Naive thymus-derived CD4-positive, alpha-beta T cell (primary cell): ENCODE measurements at regions of chr2 and their contacts with region 1.

Region 1: DNA sequence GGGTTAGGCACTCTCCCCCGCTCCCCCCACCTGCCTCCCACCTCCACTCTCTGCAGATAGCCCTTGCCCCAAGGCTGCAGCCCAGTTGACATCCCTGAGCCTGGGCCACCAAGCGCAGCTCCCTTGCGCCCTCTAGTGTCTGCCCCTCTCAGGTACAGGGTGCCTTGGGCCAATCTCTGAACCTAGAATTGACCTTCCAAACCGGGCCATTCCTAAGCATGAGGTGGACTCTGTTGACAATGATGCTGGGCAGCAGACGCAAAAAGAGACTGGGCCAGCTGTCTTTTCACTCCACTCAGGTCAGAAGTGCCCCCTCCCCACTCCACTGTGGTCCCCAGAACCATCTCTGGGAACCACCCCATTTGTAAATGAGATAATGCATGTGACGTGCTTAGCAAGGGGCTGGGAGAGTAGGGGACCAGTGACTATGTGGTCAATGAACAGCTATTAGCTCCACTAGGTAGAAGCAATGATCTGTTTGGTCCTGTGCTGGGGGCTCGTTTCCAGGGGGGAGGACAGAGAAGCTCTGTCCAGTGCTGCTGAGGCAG is 43.3 kb upstream of the PLB1 start:
- DNase-seq: peak; percentile 42 to 86 (median 65)
- ATAC-seq: peak; percentile 79
- H3K4me3 ChIP-seq: no peak overlapping the region
- H3K4me3 Mint-ChIP-seq: no peak overlapping the region
- H3K27ac ChIP-seq: no peak overlapping the region
- H3K27ac Mint-ChIP-seq: no peak overlapping the region
- H3K4me1 ChIP-seq: no peaks in the 10 kb centered on the region
- H3K4me1 Mint-ChIP-seq: peaks cover 0 to 44% (median 0%) of the 10 kb centered on the region in 7 donors
- H3K27me3 ChIP-seq: no peaks in the 10 kb centered on the region
- H3K27me3 Mint-ChIP-seq: no peaks in the 10 kb centered on the region

Region 2: DNA sequence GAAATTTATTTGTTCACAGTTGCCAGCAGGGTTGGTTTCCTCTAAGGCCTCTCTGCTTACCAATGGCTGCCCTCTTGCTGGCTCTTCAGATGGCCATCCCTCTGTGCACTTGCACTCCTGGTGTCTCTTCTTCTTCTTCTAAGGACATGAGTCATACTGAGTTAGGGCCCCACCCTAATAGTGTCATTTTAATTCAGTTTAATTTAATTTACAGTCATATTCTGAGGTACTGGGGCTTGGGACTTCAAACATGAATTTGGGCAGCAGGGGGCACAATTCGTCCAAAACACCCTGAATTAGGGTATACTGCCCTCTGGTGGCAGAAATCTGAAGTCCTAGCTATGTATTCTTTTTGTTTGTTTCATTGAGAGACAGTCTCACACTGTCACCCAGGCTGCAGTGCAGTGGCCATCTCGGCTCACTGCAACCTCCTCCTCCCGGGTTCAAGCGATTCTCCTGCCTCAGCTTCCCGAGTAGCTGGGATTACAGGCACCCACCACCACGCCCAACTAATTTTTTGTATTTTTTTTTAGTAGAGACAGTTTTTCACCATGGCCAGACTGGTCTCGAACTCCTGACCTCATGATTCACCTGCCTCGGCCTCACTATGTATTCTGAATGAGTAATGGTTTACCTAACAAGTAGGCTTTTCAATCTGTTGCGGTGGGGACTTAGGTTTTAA is 769.1 kb before region 1 on chr2:
- CTCF ChIA-PET with region 1: interaction called, 3 read pairs
- POLR2A ChIA-PET with region 1: no interaction called
- intact Hi-C with region 1: loop called in 1 of 2 experiments (anchors 1 kb)
- DNase-seq: peak; percentile 54 to 90 (median 82)
- ATAC-seq: peak; percentile 98
- H3K4me3 ChIP-seq: no peak overlapping the region
- H3K4me3 Mint-ChIP-seq: peak overlapping the region in 1 of 10 donors; percentile 35
- H3K27ac ChIP-seq: no peak overlapping the region
- H3K27ac Mint-ChIP-seq: peak overlapping the region; percentile 35 to 78 (median 66)
- H3K4me1 ChIP-seq: peaks cover 0 to 28% of the 10 kb centered on the region in 2 donors
- H3K4me1 Mint-ChIP-seq: peaks cover 5 to 25% (median 13%) of the 10 kb centered on the region in 7 donors
- H3K27me3 ChIP-seq: no peaks in the 10 kb centered on the region
- H3K27me3 Mint-ChIP-seq: no peaks in the 10 kb centered on the region

Region 3: GRCh38 chr2:27723372-27724144 is 729.0 kb before region 1 on chr2:
- CTCF ChIA-PET with region 1: no interaction called
- POLR2A ChIA-PET with region 1: no interaction called
- intact Hi-C with region 1: loop called in 1 of 2 experiments (anchors 1 kb)
- DNase-seq: peak in 2 of 9 donors; percentile 18 to 26
- ATAC-seq: peak; percentile 57
- H3K4me3 ChIP-seq: no peak overlapping the region
- H3K4me3 Mint-ChIP-seq: no peak overlapping the region
- H3K27ac ChIP-seq: no peak overlapping the region
- H3K27ac Mint-ChIP-seq: no peak overlapping the region
- H3K4me1 ChIP-seq: no peaks in the 10 kb centered on the region
- H3K4me1 Mint-ChIP-seq: peaks cover 0 to 29% (median 10%) of the 10 kb centered on the region in 7 donors
- H3K27me3 ChIP-seq: no peaks in the 10 kb centered on the region
- H3K27me3 Mint-ChIP-seq: peaks cover 0 to 19% (median 11%) of the 10 kb centered on the region in 5 donors

Region 4: GRCh38 chr2:27771548-27772335 is 680.9 kb before region 1 on chr2 and contains the start of gene MRPL33:
- CTCF ChIA-PET with region 1: no interaction called
- POLR2A ChIA-PET with region 1: no interaction called
- intact Hi-C with region 1: loop called in 1 of 2 experiments (anchors 5 kb)
- DNase-seq: peak; percentile 85 to 92 (median 89)
- ATAC-seq: peak; percentile 97
- H3K4me3 ChIP-seq: peak within 1 kb of the TSS; percentile 92
- H3K4me3 Mint-ChIP-seq: peak within 1 kb of the TSS; percentile 96 to 100 (median 99)
- H3K27ac ChIP-seq: peak within 1 kb of the TSS; percentile 92
- H3K27ac Mint-ChIP-seq: peak within 1 kb of the TSS; percentile 97 to 100 (median 100)
- H3K4me1 ChIP-seq: peaks cover 10 to 20% of the 10 kb centered on the region in 2 donors
- H3K4me1 Mint-ChIP-seq: peaks cover 32 to 59% (median 52%) of the 10 kb centered on the region in 7 donors
- H3K27me3 ChIP-seq: no peaks in the 10 kb centered on the region
- H3K27me3 Mint-ChIP-seq: peaks cover 0 to 8% (median 0%) of the 10 kb centered on the region in 5 donors
- total RNA-seq, gene MRPL33: 27.3 to 39.4 (median 35.1) TPM

Region 5: GRCh38 chr2:28164280-28164801 is 288.3 kb before region 1 on chr2:
- CTCF ChIA-PET with region 1: no interaction called
- POLR2A ChIA-PET with region 1: no interaction called
- intact Hi-C with region 1: loop called in 1 of 2 experiments (anchors 1 kb)
- DNase-seq: no peak
- ATAC-seq: no peak
- H3K4me3 ChIP-seq: no peak overlapping the region
- H3K4me3 Mint-ChIP-seq: no peak overlapping the region
- H3K27ac ChIP-seq: no peak overlapping the region
- H3K27ac Mint-ChIP-seq: no peak overlapping the region
- H3K4me1 ChIP-seq: no peaks in the 10 kb centered on the region
- H3K4me1 Mint-ChIP-seq: peaks cover 0 to 7% (median 0%) of the 10 kb centered on the region in 7 donors
- H3K27me3 ChIP-seq: no peaks in the 10 kb centered on the region
- H3K27me3 Mint-ChIP-seq: no peaks in the 10 kb centered on the region

Region 6: DNA sequence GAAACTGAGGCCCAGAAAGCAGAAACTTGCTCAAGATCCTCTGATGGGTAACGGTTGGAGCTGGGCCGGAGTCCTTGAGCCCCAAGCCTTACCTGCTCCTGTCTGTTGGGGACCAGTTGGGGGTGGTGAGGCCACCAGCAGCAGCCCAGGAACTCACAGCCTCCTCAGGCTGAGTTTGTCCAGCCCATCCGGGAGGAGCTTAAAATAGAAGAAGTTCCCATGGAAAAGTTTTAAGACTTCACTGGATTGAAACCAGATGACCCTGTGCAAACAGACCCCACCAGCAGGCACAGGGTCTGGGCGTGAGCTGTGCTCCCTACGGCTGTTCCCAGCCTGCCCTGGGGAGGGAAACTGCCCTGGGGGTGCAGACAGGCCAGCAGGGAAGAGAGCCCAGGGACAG is 100.5 kb before region 1 on chr2:
- CTCF ChIA-PET with region 1: no interaction called
- POLR2A ChIA-PET with region 1: no interaction called
- intact Hi-C with region 1: no loop called
- DNase-seq: no peak
- ATAC-seq: no peak
- H3K4me3 ChIP-seq: no peak overlapping the region
- H3K4me3 Mint-ChIP-seq: no peak overlapping the region
- H3K27ac ChIP-seq: no peak overlapping the region
- H3K27ac Mint-ChIP-seq: peak overlapping the region in 1 of 9 donors; percentile 79
- H3K4me1 ChIP-seq: peaks cover 19 to 24% of the 10 kb centered on the region in 2 donors
- H3K4me1 Mint-ChIP-seq: peaks cover 12 to 30% (median 22%) of the 10 kb centered on the region in 7 donors
- H3K27me3 ChIP-seq: no peaks in the 10 kb centered on the region
- H3K27me3 Mint-ChIP-seq: no peaks in the 10 kb centered on the region

Region 7: GRCh38 chr2:28413142-28413898 is 39.3 kb before region 1 on chr2:
- CTCF ChIA-PET with region 1: no interaction called
- POLR2A ChIA-PET with region 1: no interaction called
- intact Hi-C with region 1: loop called (anchors 1 to 2 kb)
- DNase-seq: no peak
- ATAC-seq: no peak
- H3K4me3 ChIP-seq: no peak overlapping the region
- H3K4me3 Mint-ChIP-seq: no peak overlapping the region
- H3K27ac ChIP-seq: no peak overlapping the region
- H3K27ac Mint-ChIP-seq: peak overlapping the region in 8 of 9 donors; percentile 43 to 96 (median 76)
- H3K4me1 ChIP-seq: peaks cover 28 to 35% of the 10 kb centered on the region in 2 donors
- H3K4me1 Mint-ChIP-seq: peaks cover 23 to 48% (median 39%) of the 10 kb centered on the region in 7 donors
- H3K27me3 ChIP-seq: no peaks in the 10 kb centered on the region
- H3K27me3 Mint-ChIP-seq: no peaks in the 10 kb centered on the region

Region 8: GRCh38 chr2:29255004-29255403 is 802.4 kb after region 1 on chr2:
- CTCF ChIA-PET with region 1: no interaction called
- POLR2A ChIA-PET with region 1: no interaction called
- intact Hi-C with region 1: no loop called
- DNase-seq: no peak
- ATAC-seq: no peak
- H3K4me3 ChIP-seq: no peak overlapping the region
- H3K4me3 Mint-ChIP-seq: no peak overlapping the region
- H3K27ac ChIP-seq: no peak overlapping the region
- H3K27ac Mint-ChIP-seq: no peak overlapping the region
- H3K4me1 ChIP-seq: no peaks in the 10 kb centered on the region
- H3K4me1 Mint-ChIP-seq: no peaks in the 10 kb centered on the region
- H3K27me3 ChIP-seq: no peaks in the 10 kb centered on the region
- H3K27me3 Mint-ChIP-seq: peaks cover 6 to 23% (median 17%) of the 10 kb centered on the region in 5 donors